Posterior cingulate gyrus (tissue), 11 donors: ENCODE measurements at regions of chr3 and their contacts with region 1.

Region 1: DNA sequence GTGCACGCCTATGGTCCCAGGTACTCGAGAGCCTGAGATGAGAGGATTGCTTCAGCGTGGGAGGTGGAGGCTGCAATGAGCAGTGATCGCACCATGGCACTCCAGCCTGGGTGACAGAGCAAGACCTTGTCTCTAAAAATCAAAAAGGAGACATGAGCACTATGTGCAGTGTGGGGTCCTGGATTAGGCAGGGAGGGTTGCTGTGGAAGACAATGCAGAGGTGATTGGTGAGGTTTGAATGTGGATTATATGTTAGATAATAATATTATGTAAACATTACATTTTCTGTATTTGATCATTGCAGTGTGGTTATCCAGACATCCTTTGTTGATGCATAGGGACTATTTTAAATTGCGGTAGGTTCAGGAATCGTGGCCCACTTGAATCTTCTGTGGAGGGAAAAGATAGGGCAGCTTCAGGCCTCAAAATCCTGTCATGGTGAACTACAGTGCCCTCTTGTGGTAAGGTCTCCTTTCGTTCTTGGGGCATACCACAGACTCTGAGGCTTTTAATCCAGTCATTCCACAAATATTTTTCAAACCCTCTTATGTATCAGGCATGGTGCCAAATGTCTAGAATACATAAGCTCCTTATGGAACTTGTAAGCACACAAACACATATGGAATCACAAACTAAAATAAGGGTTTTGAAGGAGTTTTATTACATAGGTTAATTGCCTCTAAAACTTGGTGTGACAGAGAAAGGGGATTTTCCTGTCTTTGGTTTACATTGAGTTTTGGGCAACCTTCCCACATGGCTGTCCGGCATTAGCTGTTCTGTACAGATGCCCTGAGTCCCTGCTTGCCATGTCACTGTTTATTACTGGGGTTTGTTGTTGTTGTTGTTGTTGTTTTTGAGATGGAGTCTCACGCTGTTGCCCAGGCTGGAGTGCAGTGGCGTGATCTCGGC is 37.7 kb downstream of the GPD1L start:
- DNase-seq: peak in 4 of 10 donors; percentile 29 to 55 (median 43)

Region 2: DNA sequence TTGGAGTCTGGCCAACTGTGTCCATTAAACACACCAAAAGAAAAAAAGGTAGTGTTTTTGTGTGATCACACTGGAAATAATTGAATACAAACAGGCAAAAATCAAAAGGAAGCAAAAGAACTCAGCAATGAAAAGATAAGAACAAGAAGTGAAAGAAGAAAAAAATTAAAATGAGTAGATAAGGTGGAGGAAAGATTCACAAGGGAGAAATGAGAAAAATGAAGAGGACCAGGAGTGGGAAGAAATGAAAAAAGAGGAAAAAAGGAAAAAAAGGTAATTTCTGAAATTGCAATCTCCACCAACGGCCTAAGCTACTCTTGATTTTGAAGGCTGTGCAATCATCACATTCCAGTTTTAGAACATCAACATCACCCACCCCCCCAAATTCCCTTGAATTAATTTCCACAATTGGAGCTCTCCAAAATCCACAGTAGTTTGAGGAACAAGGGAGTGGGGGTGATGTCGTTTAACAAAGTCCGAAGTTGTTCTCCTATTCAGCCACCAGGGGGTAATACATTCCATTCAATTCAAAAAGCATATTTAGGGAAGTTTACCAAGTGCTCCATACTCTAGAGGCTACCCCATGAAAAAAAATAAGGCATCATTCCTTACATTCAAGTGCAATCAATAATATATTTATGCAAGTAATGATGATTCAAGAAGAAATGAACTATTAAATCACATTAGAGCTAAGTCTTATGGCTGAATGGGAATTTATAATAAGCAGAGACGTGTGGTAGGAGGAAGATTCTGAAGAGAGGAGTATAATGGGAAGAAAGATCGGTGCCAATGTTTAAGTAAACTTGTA is 125.1 kb before region 1 on chr3:
- intact Hi-C with region 1: loop called (anchors 2 kb)
- DNase-seq: no peak

Region 3: GRCh38 chr3:32106280-32106928 is 37.7 kb before region 1 on chr3 and contains the start of gene GPD1L:
- intact Hi-C with region 1: loop called (anchors 5 kb)
- DNase-seq: peak; percentile 91 to 100 (median 96)

Region 4: GRCh38 chr3:32200490-32200889 is 56.4 kb after region 1 on chr3:
- intact Hi-C with region 1: no loop called
- DNase-seq: no peak